MCF 10A (cell line): ENCODE measurements at regions of chr4 and their contacts with region 1.

Region 1: DNA sequence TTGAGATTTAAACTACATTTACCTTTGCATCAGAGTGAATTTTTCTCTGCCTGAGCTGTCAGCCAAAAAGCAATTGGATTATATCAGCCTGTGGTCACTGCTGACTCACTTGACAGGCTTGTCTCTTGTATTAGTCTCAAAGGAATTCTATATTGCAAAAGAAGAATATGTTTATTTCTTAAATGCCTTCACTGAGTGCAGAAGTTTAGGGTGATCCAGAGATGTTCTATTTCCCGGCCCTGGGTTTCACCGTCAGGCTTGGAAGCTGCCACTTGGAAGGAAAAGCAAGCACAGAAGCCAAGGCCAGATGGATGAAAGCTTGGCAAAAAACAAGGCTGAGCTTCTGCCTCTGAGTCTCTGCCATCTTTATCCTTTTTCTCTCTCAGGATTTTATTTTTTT is 80.9 kb downstream of the FAM114A1 start:
- DNase-seq: peak; percentile 76
- H3K4me3 Mint-ChIP-seq: no peak overlapping the region
- H3K27ac Mint-ChIP-seq: peak overlapping the region; percentile 11
- H3K4me1 Mint-ChIP-seq: peaks cover 27% of the 10 kb centered on the region
- H3K27me3 Mint-ChIP-seq: no peaks in the 10 kb centered on the region
- CTCF ChIP-seq: no peak

Region 2: DNA sequence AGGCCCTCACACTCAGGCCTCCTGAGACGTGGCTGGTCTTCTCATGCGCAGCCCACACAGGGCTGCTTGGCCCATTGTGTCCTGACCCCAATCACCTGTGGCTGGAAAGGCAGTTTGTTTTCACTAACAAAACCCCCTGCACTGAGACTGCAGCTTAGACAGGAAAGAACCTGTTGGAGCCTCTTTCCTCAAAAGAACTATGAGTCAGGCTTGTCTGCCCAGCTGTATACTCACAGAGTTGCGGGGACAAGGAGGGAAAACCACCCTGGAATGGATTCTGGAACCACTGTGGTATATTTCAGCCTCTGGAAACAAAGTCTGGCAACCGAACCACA is 88.9 kb after region 1 on chr4:
- CTCF ChIA-PET with region 1: interaction called, 3 read pairs
- POLR2A ChIA-PET with region 1: interaction called, 10 read pairs
- intact Hi-C with region 1: no loop called
- DNase-seq: peak; percentile 77
- H3K4me3 Mint-ChIP-seq: no peak overlapping the region
- H3K27ac Mint-ChIP-seq: peak overlapping the region; percentile 78
- H3K4me1 Mint-ChIP-seq: peaks cover 26% of the 10 kb centered on the region
- H3K27me3 Mint-ChIP-seq: no peaks in the 10 kb centered on the region
- CTCF ChIP-seq: no peak

Region 3: DNA sequence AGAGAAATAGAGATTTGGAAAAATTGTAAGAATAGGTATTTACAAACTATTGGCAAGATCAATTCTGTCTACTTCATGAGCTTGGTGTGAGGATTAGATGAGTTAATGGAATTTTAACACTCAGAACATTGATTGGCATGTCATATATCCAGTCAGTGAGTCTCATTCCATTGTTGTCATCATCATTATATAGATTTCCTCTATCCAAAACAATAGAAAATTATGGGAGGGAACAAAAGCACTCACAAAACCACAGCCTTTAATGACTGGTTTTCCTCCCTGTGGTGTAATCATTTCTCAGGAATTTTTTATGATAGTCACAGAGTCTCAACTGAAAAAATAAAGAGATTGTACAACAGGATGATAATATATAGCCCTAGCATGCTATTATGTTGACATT is 134.6 kb after region 1 on chr4:
- CTCF ChIA-PET with region 1: no interaction called
- POLR2A ChIA-PET with region 1: no interaction called
- intact Hi-C with region 1: loop called (anchors 1 kb)
- DNase-seq: peak; percentile 48
- H3K4me3 Mint-ChIP-seq: no peak overlapping the region
- H3K27ac Mint-ChIP-seq: no peak overlapping the region
- H3K4me1 Mint-ChIP-seq: peaks cover 22% of the 10 kb centered on the region
- H3K27me3 Mint-ChIP-seq: no peaks in the 10 kb centered on the region
- CTCF ChIP-seq: no peak